Heart right ventricle (tissue), 16 donors: ENCODE measurements at regions of chr5 and their contacts with region 1.

Region 1: GRCh38 chr5:159100025-159100781 is 487 bp upstream of the EBF1 start:
- DNase-seq: peak; percentile 92 to 93
- ATAC-seq: peak; percentile 89 to 95 (median 92)
- H3K4me3 ChIP-seq: peak overlapping the region; percentile 56 to 78 (median 70)
- H3K27ac ChIP-seq: peak overlapping the region; percentile 81 to 96 (median 91)
- H3K4me1 ChIP-seq: peaks cover 3 to 71% (median 39%) of the 10 kb centered on the region in 9 donors
- H3K27me3 ChIP-seq: peaks cover 0 to 96% (median 42%) of the 10 kb centered on the region in 7 donors
- CTCF ChIP-seq: no peak

Region 2: DNA sequence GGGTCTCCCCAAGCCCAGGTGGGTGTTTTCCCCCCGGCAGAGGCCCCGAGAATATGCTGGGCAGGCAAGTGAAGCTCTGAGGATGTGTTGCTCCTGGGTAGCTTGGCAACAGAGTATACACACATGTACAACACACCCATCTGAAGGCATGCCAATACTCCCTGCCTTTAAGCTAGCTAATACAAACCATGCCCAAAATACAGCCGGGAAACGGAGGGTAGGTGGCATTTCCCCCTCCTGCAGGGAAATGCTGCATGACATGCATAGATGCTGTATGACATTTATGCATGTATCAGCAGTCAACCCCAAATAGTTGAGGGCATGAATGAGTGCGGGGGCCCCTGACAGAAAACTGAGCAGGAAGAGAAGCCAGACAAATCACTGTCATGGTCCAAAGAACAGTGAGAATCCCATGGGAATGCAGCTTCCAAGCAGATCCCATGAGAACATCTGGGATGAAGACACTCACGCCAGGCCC is 614.6 kb before region 1 on chr5:
- intact Hi-C with region 1: loop called in 1 of 10 experiments (anchors 5 kb)
- DNase-seq: peak in 1 of 2 donors; percentile 58
- ATAC-seq: peak in 7 of 8 donors; percentile 56 to 77 (median 72)
- H3K4me3 ChIP-seq: no peak overlapping the region
- H3K27ac ChIP-seq: peak overlapping the region; percentile 31 to 81 (median 61)
- H3K4me1 ChIP-seq: peaks cover 2 to 69% (median 24%) of the 10 kb centered on the region in 9 donors
- H3K27me3 ChIP-seq: no peaks in the 10 kb centered on the region
- CTCF ChIP-seq: no peak

Region 3: DNA sequence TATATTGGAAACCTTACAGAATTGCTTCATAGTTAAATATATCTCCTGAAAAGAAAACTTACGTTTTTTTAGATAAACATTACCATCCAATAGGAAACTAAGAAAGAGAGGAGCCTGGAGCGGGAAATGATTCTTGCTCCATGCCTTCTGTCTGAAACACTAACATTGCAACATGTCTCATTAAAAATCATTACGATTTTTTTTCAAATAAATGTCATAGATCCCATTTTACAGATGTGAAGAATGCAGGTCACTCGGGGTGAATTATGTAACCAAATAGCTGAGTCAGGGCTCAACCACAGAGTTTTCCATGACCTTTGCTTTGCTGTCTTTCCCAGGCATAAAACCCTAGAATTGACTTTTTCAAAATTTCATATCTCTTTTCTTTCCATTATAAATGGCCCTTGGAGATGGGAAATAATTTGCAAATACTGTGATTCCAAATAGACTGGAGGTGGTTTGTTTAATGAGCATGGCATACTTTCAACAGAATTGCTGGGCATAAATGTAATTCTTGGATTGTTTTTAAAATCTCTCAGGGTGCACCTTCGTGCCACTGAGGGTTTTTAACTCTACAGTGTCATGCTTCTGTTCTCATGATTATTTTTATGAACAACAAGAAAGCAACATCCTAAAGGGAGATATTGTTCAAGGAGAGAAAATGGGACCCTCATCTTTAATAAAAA is 303.2 kb before region 1 on chr5:
- intact Hi-C with region 1: loop called in 1 of 10 experiments (anchors 10 kb)
- DNase-seq: no peak
- ATAC-seq: peak in 3 of 8 donors; percentile 27 to 53 (median 37)
- H3K4me3 ChIP-seq: no peak overlapping the region
- H3K27ac ChIP-seq: peak overlapping the region in 2 of 10 donors; percentile 7 to 41
- H3K4me1 ChIP-seq: peaks cover 0 to 46% (median 16%) of the 10 kb centered on the region in 9 donors
- H3K27me3 ChIP-seq: no peaks in the 10 kb centered on the region
- CTCF ChIP-seq: no peak

Region 4: DNA sequence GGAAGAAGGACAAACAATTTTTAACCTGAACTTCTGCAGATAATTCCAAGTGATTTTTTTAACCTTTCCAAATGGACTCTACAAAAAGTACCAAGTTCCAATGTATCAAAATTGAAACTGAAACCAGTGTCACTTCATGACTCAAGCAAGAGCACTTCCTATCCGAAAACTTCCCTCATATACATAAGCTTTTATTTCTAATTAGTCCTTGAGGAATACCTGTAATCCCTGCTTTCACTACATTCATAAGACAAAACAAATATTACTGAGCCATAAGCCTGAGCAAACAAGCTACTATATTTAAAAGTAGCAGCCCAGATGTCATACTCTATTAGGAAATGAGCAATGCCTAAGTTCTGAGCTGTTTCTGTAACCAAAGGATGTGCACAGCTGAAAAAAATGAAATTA is 224.9 kb before region 1 on chr5:
- intact Hi-C with region 1: loop called in 4 of 10 experiments (anchors 5 to 10 kb)
- DNase-seq: no peak
- ATAC-seq: peak in 6 of 8 donors; percentile 20 to 65 (median 50)
- H3K4me3 ChIP-seq: peak overlapping the region in 6 of 10 donors; percentile 16 to 34 (median 28)
- H3K27ac ChIP-seq: peak overlapping the region; percentile 3 to 86 (median 67)
- H3K4me1 ChIP-seq: peaks cover 0 to 50% (median 37%) of the 10 kb centered on the region in 9 donors
- H3K27me3 ChIP-seq: no peaks in the 10 kb centered on the region
- CTCF ChIP-seq: no peak

Region 5: GRCh38 chr5:158979749-158980521 is 120.3 kb before region 1 on chr5:
- intact Hi-C with region 1: loop called in 1 of 10 experiments (anchors 10 kb)
- DNase-seq: peak; percentile 54 to 57
- ATAC-seq: peak; percentile 61 to 82 (median 71)
- H3K4me3 ChIP-seq: peak overlapping the region in 9 of 10 donors; percentile 6 to 36 (median 32)
- H3K27ac ChIP-seq: peak overlapping the region in 9 of 10 donors; percentile 14 to 78 (median 65)
- H3K4me1 ChIP-seq: peaks cover 4 to 61% (median 39%) of the 10 kb centered on the region in 9 donors
- H3K27me3 ChIP-seq: no peaks in the 10 kb centered on the region
- CTCF ChIP-seq: no peak

Region 6: GRCh38 chr5:159049844-159050315 is 50.3 kb before region 1 on chr5:
- intact Hi-C with region 1: loop called in 6 of 10 experiments (anchors 2 to 5 kb)
- DNase-seq: peak in 1 of 2 donors; percentile 27
- ATAC-seq: peak; percentile 45 to 77 (median 62)
- H3K4me3 ChIP-seq: peak overlapping the region in 7 of 10 donors; percentile 10 to 51 (median 43)
- H3K27ac ChIP-seq: peak overlapping the region; percentile 75 to 93 (median 83)
- H3K4me1 ChIP-seq: peaks cover 0 to 82% (median 42%) of the 10 kb centered on the region in 9 donors
- H3K27me3 ChIP-seq: peaks cover 0 to 41% (median 3%) of the 10 kb centered on the region in 7 donors
- CTCF ChIP-seq: peak; percentile 14 to 66 (median 47)